Esophagus muscularis mucosa (tissue), 4 donors: ENCODE measurements at regions of chr5 and their contacts with region 1.

Region 1: DNA sequence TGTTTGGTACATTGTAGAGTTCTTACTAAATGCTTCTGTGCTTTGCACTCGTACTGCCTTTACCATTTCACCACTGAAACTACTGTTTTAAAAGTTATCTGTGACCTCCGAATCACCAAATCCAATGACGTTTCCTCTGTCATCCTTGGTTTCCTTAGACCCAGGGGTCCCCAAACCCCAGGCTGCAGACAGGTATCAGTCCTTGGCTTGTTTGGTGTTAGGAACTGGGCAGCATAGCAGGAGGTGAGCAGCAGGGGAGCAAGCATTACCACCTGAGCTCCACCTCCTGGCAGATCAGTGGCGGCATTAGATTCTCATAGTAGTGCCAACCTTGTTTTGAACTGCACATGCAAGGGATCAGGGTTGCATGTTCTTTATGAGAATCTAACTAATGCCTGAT is 26.8 kb upstream of the APC start:
- DNase-seq: peak; percentile 60
- H3K4me3 ChIP-seq: no peak overlapping the region
- H3K27ac ChIP-seq: no peak overlapping the region
- H3K4me1 ChIP-seq: peaks cover 29 to 66% (median 60%) of the 10 kb centered on the region in 4 donors
- H3K27me3 ChIP-seq: no peaks in the 10 kb centered on the region
- CTCF ChIP-seq: no peak
- EP300 ChIP-seq: no peak
- POLR2A ChIP-seq: no peak

Region 2: GRCh38 chr5:112657804-112658203 is 53.1 kb before region 1 on chr5:
- intact Hi-C with region 1: no loop called
- DNase-seq: no peak
- H3K4me3 ChIP-seq: no peak overlapping the region
- H3K27ac ChIP-seq: no peak overlapping the region
- H3K4me1 ChIP-seq: no peaks in the 10 kb centered on the region
- H3K27me3 ChIP-seq: no peaks in the 10 kb centered on the region
- CTCF ChIP-seq: no peak
- EP300 ChIP-seq: no peak
- POLR2A ChIP-seq: no peak

Region 3: GRCh38 chr5:112752335-112752734 is 41.4 kb after region 1 on chr5:
- intact Hi-C with region 1: loop called (anchors 5 kb)
- DNase-seq: no peak
- H3K4me3 ChIP-seq: no peak overlapping the region
- H3K27ac ChIP-seq: no peak overlapping the region
- H3K4me1 ChIP-seq: peaks cover 0 to 25% (median 10%) of the 10 kb centered on the region in 4 donors
- H3K27me3 ChIP-seq: no peaks in the 10 kb centered on the region
- CTCF ChIP-seq: no peak
- EP300 ChIP-seq: no peak
- POLR2A ChIP-seq: no peak

Region 4: DNA sequence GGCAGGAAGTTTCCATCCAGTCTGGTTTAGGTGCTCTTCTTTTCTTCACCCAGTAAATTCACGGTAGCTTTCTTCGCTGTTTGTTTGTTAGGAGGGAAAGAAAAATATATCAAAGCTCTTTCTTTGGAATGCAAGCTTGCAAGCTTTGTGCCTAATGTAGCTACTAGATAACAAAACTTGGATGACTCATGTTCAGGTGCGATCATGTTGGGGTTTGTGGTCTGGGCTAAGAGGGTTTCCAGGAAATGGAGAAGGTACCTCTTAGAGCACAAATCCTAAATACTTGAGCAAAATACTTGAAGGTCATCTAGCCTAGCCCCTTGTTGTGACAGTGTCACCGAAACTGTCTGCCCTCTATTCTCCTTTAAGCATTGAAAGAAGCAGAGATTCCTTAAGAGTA is 167.9 kb after region 1 on chr5:
- intact Hi-C with region 1: no loop called
- DNase-seq: no peak
- H3K4me3 ChIP-seq: no peak overlapping the region
- H3K27ac ChIP-seq: no peak overlapping the region
- H3K4me1 ChIP-seq: peaks cover 0 to 17% (median 8%) of the 10 kb centered on the region in 4 donors
- H3K27me3 ChIP-seq: no peaks in the 10 kb centered on the region
- CTCF ChIP-seq: no peak
- EP300 ChIP-seq: no peak
- POLR2A ChIP-seq: no peak

Region 5: DNA sequence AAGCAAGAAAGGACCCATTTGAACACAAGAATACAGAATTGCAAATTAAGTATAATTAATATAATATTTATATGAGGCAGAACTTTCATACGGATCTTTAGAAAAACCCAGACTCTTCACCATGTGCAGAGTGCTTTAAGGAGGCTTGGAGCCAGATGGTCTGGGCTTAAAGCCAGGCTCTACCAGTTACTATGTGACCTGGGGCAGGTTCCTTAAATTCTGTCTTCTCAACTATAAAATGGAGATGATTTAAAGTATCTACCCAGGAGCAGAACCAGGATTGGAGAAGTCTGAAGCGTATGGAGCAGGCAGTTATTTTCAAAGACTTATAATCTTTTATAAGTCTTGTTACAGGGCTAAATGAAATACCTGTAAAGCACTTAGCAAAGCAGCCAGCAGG is 521.8 kb after region 1 on chr5:
- intact Hi-C with region 1: no loop called
- DNase-seq: peak; percentile 70
- H3K4me3 ChIP-seq: no peak overlapping the region
- H3K27ac ChIP-seq: no peak overlapping the region
- H3K4me1 ChIP-seq: peaks cover 22 to 33% (median 27%) of the 10 kb centered on the region in 4 donors
- H3K27me3 ChIP-seq: no peaks in the 10 kb centered on the region
- CTCF ChIP-seq: no peak
- EP300 ChIP-seq: no peak
- POLR2A ChIP-seq: no peak